B cell (primary cell): ENCODE measurements at regions of chr12 and their contacts with region 1.

Region 1: GRCh38 chr12:95858479-95859343 is at the start of gene SNRPF:
- DNase-seq: peak; percentile 97
- ATAC-seq: peak; percentile 96
- H3K4me3 ChIP-seq: peak within 1 kb of the TSS; percentile 70 to 89 (median 76)
- H3K4me3 Mint-ChIP-seq: no peak within 1 kb of the TSS
- H3K27ac ChIP-seq: peak within 1 kb of the TSS; percentile 83 to 95
- H3K27ac Mint-ChIP-seq: peak within 1 kb of the TSS; percentile 37
- H3K4me1 ChIP-seq: peaks cover 24 to 28% of the 10 kb centered on the region in 2 donors
- H3K4me1 Mint-ChIP-seq: peaks cover 14% of the 10 kb centered on the region
- H3K27me3 ChIP-seq: peaks cover 0 to 11% (median 9%) of the 10 kb centered on the region in 4 experiments
- H3K27me3 Mint-ChIP-seq: peaks cover 9% of the 10 kb centered on the region
- CTCF ChIP-seq: peak; percentile 18
- total RNA-seq, gene SNRPF: 23.8 and 25.5 TPM in 2 replicates

Region 2: DNA sequence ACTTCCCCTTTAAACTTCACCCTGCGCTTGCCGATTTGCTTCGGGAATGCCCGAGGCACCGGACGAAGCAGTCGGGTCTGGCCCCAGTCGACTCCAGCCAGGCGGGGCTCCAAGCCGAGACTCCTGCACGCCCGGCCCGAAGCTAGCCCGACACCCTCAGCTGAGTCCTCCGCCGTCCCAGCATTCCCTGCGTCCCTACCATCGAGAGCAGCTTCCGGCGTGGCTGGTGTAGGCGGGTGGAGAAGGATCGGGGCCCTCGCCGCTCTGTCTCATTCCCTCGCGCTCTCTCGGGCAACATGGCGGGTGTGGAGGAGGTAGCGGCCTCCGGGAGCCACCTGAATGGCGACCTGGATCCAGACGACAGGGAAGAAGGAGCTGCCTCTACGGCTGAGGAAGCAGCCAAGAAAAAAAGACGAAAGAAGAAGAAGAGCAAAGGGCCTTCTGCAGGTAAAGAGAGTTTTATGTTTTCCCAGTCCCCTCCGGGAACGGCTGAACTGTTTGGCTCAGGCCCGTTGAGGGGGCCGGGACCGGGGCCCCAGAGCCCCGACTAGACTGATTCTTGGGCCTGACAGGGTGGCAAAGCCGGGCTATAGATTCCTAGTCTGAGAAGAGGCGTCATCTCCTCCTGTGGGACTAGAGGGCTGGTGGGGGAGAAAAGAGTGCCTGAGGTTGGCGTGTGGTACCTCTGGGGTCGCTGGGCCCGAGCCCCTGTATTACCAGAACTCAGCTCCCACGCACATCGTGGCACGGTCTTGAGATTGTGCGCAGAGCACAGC is 384.6 kb before region 1 on chr12 and contains the start of gene METAP2:
- CTCF ChIA-PET with region 1: no interaction called
- POLR2A ChIA-PET with region 1: no interaction called
- intact Hi-C with region 1: loop called (anchors 5 kb)
- DNase-seq: peak; percentile 92
- ATAC-seq: peak; percentile 97
- H3K4me3 ChIP-seq: peak within 1 kb of the TSS; percentile 71 to 98 (median 90)
- H3K4me3 Mint-ChIP-seq: peak within 1 kb of the TSS; percentile 100
- H3K27ac ChIP-seq: peak within 1 kb of the TSS; percentile 73 to 94
- H3K27ac Mint-ChIP-seq: peak within 1 kb of the TSS; percentile 99
- H3K4me1 ChIP-seq: peaks cover 16 to 17% of the 10 kb centered on the region in 2 donors
- H3K4me1 Mint-ChIP-seq: peaks cover 47% of the 10 kb centered on the region
- H3K27me3 ChIP-seq: no peaks in the 10 kb centered on the region
- H3K27me3 Mint-ChIP-seq: peaks cover 6% of the 10 kb centered on the region
- CTCF ChIP-seq: no peak
- total RNA-seq, gene METAP2: 49.9 and 64.5 TPM in 2 replicates

Region 3: GRCh38 chr12:95548539-95549391 is 309.9 kb before region 1 on chr12:
- CTCF ChIA-PET with region 1: no interaction called
- POLR2A ChIA-PET with region 1: no interaction called
- intact Hi-C with region 1: loop called (anchors 10 kb)
- DNase-seq: peak; percentile 87
- ATAC-seq: peak; percentile 91
- H3K4me3 ChIP-seq: peak overlapping the region; percentile 52 to 91 (median 81)
- H3K4me3 Mint-ChIP-seq: peak overlapping the region; percentile 92
- H3K27ac ChIP-seq: peak overlapping the region; percentile 73 to 78
- H3K27ac Mint-ChIP-seq: peak overlapping the region; percentile 85
- H3K4me1 ChIP-seq: peaks cover 12 to 13% of the 10 kb centered on the region in 2 donors
- H3K4me1 Mint-ChIP-seq: peaks cover 25% of the 10 kb centered on the region
- H3K27me3 ChIP-seq: peaks cover 0 to 7% (median 0%) of the 10 kb centered on the region in 4 experiments
- H3K27me3 Mint-ChIP-seq: peaks cover 6% of the 10 kb centered on the region
- CTCF ChIP-seq: no peak

Region 4: DNA sequence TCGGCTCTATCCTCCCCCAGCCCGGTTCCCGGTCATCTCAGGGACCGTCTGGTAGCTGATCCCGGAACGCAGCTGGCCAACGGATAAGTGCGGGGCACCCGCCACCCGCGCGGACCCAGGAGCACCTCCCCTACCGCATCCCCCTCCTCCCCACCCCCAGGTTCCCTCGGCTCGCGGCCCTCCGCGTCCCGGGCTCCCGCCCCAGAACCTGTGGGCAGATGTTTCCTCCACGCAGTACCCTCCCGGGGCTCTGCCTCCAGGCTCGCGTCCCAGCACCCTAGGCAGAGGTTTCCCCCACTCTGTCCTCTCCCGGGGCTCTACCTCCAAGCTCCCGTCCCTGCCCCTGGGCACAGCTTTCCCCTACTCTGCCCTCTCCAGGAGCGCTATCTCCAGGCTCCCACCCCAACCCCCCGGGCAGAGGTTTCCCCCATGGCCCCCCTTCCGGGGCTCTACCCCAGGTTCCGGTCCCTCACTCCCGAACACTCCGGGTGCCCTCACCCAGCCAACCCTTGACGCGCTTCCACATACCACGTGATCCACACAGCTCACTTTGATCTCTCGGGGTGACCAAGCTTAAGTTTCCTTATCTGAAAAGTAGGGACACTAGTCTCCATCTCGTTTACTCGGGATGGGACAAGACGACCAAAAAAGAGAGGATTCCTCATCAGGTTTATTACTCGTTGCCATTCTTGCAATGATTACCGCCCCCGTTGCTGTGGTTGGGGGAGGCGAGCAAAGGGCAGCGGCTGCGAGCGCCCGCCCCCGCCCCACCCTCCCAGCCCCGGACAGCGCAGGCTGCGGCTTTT is 84.0 kb after region 1 on chr12 and contains the start of gene CCDC38:
- CTCF ChIA-PET with region 1: no interaction called
- POLR2A ChIA-PET with region 1: no interaction called
- intact Hi-C with region 1: loop called (anchors 2 kb)
- DNase-seq: peak; percentile 85
- ATAC-seq: peak; percentile 88
- H3K4me3 ChIP-seq: peak within 1 kb of the TSS; percentile 68 to 94 (median 89)
- H3K4me3 Mint-ChIP-seq: peak within 1 kb of the TSS; percentile 98
- H3K27ac ChIP-seq: peak within 1 kb of the TSS; percentile 71 to 87
- H3K27ac Mint-ChIP-seq: peak within 1 kb of the TSS; percentile 92
- H3K4me1 ChIP-seq: peaks cover 9 to 11% of the 10 kb centered on the region in 2 donors
- H3K4me1 Mint-ChIP-seq: peaks cover 10% of the 10 kb centered on the region
- H3K27me3 ChIP-seq: no peaks in the 10 kb centered on the region
- H3K27me3 Mint-ChIP-seq: no peaks in the 10 kb centered on the region
- CTCF ChIP-seq: no peak
- total RNA-seq, gene CCDC38: 1.00 and 1.3 TPM in 2 replicates

Region 5: GRCh38 chr12:96489103-96490056 is 630.7 kb after region 1 on chr12 and contains the start of gene CFAP54:
- CTCF ChIA-PET with region 1: no interaction called
- POLR2A ChIA-PET with region 1: no interaction called
- intact Hi-C with region 1: loop called (anchors 5 kb)
- DNase-seq: peak; percentile 96
- ATAC-seq: peak; percentile 91
- H3K4me3 ChIP-seq: peak within 1 kb of the TSS; percentile 35 to 75 (median 67)
- H3K4me3 Mint-ChIP-seq: peak within 1 kb of the TSS; percentile 90
- H3K27ac ChIP-seq: peak within 1 kb of the TSS in 1 of 2 donors; percentile 69
- H3K27ac Mint-ChIP-seq: peak within 1 kb of the TSS; percentile 86
- H3K4me1 ChIP-seq: peaks cover 8 to 10% of the 10 kb centered on the region in 2 donors
- H3K4me1 Mint-ChIP-seq: peaks cover 16% of the 10 kb centered on the region
- H3K27me3 ChIP-seq: peaks cover 0 to 6% (median 3%) of the 10 kb centered on the region in 4 experiments
- H3K27me3 Mint-ChIP-seq: no peaks in the 10 kb centered on the region
- CTCF ChIP-seq: peak; percentile 89
- total RNA-seq, gene CFAP54: 0.24 and 0.76 TPM in 2 replicates

Region 6: DNA sequence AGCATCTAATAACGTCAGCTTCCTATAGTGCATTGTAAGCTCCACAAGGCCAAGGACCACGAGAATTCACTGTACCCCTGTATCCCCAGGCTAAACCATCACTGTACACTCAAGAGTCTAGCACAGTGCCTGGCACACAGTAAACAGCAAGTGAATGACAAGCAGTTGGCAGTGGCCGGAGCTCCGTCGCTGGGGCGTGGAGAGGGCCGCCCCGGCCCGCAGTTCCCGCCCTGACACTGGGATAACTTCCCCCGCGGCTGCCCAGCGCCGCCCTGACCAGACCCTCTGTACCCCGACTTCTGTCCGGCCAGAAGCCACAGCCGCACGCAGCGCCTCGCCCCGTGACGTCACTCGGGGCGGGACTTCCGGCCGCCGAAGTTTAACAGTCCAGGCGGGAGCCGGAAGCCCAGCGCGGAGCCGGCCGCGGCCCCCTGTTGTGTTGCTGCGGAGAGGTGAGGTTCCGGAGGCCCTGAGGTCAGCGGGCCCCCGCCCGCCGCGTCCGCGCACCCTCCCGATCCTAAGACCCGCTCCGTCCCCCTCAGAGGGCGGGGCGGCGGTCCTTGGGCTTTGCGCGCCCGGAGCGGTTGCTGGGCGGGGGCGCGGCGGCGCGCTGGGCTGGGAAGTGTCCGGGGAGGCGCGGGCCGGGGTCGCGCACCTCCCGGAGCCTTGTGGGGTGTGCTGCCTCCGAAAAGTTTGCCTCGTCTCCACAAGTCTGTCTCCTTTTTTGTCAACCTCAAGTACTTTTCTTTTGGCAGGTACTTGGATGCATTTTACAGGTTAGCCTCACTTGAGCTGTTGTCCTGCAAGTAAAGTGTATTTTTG is 1048.3 kb after region 1 on chr12 and contains the start of gene NEDD1:
- CTCF ChIA-PET with region 1: no interaction called
- POLR2A ChIA-PET with region 1: no interaction called
- intact Hi-C with region 1: loop called (anchors 1 kb)
- DNase-seq: peak; percentile 89
- ATAC-seq: peak; percentile 85
- H3K4me3 ChIP-seq: peak within 1 kb of the TSS; percentile 82 to 98 (median 94)
- H3K4me3 Mint-ChIP-seq: peak within 1 kb of the TSS; percentile 97
- H3K27ac ChIP-seq: peak within 1 kb of the TSS; percentile 91 to 96
- H3K27ac Mint-ChIP-seq: peak within 1 kb of the TSS; percentile 97
- H3K4me1 ChIP-seq: peaks cover 17 to 21% of the 10 kb centered on the region in 2 donors
- H3K4me1 Mint-ChIP-seq: peaks cover 42% of the 10 kb centered on the region
- H3K27me3 ChIP-seq: no peaks in the 10 kb centered on the region
- H3K27me3 Mint-ChIP-seq: no peaks in the 10 kb centered on the region
- CTCF ChIP-seq: no peak
- total RNA-seq, gene NEDD1: 16.8 and 20.3 TPM in 2 replicates